ENCODE measurements at regions of chr14 and their contacts with region 1.

Region 1: GRCh38 chr14:64303471-64303917 is 9.3 kb upstream of the ESR2 start:
- DNase-seq: no peak
- H3K4me3 Mint-ChIP-seq: no peak overlapping the region
- H3K27ac Mint-ChIP-seq: no peak overlapping the region
- H3K4me1 Mint-ChIP-seq: peaks cover 8% of the 10 kb centered on the region
- H3K27me3 Mint-ChIP-seq: no peaks in the 10 kb centered on the region

Region 2: GRCh38 chr14:63388763-63389431 is 914.6 kb before region 1 on chr14:
- intact Hi-C with region 1: loop called (anchors 10 kb)
- DNase-seq: peak; percentile 35
- H3K4me3 Mint-ChIP-seq: no peak overlapping the region
- H3K27ac Mint-ChIP-seq: no peak overlapping the region
- H3K4me1 Mint-ChIP-seq: peaks cover 8% of the 10 kb centered on the region
- H3K27me3 Mint-ChIP-seq: no peaks in the 10 kb centered on the region

Region 3: DNA sequence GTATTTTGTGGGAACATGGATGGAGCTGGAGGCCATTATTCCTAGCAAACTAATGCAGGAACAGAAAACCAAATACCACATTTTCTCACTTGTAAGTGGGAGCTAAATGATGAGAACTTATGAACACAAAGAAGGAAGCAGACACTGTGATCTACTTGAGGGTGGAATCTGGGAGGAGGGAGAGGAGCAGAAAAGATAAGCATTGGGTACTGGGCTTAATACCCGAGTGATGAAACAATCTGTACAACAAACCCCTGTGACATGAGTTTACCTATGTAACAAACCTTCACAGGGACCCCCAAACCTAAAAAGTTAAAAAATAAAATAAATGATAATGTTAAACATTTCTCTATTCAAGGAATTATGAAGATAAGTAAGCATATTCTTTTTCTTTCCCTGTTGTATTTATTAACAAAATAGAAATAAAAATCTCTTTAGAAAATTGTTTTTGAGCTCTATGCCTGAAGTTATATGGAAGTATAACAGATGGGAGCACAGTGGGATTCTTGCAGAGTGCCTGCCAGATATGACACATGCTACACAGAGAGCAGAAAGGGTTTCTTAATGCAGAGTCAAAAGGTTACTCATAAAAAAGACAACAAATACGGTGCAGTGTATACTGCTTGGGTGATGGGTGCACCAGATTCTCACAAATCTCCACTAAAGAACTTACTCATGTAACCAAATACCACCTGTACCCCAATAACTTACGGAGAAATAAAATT is 502.7 kb before region 1 on chr14:
- intact Hi-C with region 1: loop called (anchors 1 kb)
- DNase-seq: no peak
- H3K4me3 Mint-ChIP-seq: no peak overlapping the region
- H3K27ac Mint-ChIP-seq: no peak overlapping the region
- H3K4me1 Mint-ChIP-seq: peaks cover 5% of the 10 kb centered on the region
- H3K27me3 Mint-ChIP-seq: peaks cover 18% of the 10 kb centered on the region

Region 4: GRCh38 chr14:64005822-64006221 is 297.7 kb before region 1 on chr14:
- intact Hi-C with region 1: loop called (anchors 1 kb)
- DNase-seq: no peak
- H3K4me3 Mint-ChIP-seq: no peak overlapping the region
- H3K27ac Mint-ChIP-seq: no peak overlapping the region
- H3K4me1 Mint-ChIP-seq: no peaks in the 10 kb centered on the region
- H3K27me3 Mint-ChIP-seq: no peaks in the 10 kb centered on the region

Region 5: DNA sequence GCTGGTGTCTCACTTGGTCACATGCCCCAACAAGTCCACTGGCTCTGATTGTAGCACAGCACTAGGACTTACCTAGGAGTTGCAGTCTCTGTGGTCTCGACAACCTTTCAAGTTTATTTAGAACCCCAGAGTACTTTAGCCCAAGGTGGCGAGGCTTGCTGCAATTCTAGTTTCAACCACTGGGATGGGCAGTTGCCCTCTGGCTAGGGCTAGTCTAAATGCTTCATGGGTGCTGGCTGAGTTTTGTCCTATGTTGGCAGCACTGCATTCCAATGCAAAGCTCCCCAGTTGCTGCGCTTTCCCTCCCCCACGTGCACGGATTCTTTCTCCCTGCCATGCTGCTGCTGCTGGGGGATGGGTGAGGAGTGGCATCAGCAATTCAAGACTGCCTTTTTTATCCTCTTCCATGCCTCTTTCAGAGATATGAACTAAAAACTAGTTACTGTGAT is 242.8 kb before region 1 on chr14:
- intact Hi-C with region 1: loop called (anchors 2 kb)
- DNase-seq: no peak
- H3K4me3 Mint-ChIP-seq: no peak overlapping the region
- H3K27ac Mint-ChIP-seq: no peak overlapping the region
- H3K4me1 Mint-ChIP-seq: no peaks in the 10 kb centered on the region
- H3K27me3 Mint-ChIP-seq: no peaks in the 10 kb centered on the region

Region 6: DNA sequence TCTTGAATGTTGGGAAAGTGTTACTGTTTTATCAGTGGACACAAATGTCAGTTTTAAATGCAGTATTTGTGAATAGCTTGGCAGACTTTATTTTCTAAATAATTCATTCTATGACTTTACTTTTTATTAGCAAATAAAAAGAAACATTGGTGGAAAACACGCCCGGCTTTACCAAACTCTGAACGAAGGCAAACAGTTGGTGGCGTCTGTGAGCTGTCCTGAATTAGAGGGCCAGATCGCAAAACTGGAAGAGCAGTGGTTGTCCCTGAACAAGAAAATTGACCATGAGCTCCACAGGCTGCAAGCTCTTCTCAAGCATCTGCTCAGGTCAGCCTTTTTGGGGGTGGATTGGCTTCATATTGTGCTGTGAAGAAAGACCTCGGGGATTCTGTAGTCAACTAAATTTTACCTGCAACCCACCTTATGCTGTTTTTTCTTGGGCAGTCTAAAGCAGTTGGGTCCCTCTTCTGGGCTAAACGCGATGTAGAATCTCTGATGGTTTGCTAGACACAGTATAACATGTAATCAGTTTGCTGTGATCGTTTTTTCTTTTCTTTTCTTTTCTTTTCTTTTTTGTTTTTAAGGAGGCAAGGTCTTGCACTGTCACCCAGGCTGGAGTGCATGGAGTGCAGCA is 165.7 kb before region 1 on chr14:
- intact Hi-C with region 1: loop called (anchors 2 kb)
- DNase-seq: no peak
- H3K4me3 Mint-ChIP-seq: no peak overlapping the region
- H3K27ac Mint-ChIP-seq: no peak overlapping the region
- H3K4me1 Mint-ChIP-seq: no peaks in the 10 kb centered on the region
- H3K27me3 Mint-ChIP-seq: no peaks in the 10 kb centered on the region

Measured in activated T-helper 1 cell treated with anti-CD3 and anti-CD28 coated beads, Interleukin-12 subunit alpha, Interleukin-12 subunit beta, Interleukin-2, Interleukin-4 antibody, amounts not matched to agents 30 ng/mL and 10 ng/mL and 1 ng/mL, durations not matched to agents 14 hours and 24 hours and 36 hours (primary cell).